ENCODE measurements at regions of chr14 and their contacts with region 1.

Region 1: DNA sequence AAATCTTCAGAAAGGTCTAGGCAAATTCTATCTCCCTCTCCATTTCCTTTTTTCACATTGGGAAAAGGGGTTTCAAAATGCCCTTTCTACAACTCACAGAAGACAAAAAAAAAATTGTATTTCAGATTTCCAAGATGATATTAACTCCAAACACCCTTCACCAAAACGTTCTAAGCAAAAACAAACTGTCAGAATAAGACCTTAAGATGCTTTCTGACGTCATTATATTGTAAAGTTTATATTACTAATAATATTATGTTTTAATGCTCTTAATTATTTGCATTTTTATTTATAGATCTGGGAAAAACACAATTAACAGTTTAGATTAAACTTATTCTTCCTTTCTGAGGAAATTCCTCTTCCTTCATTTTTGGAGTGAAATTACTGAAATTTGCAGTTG is 624.2 kb downstream of the GALC start:
- DNase-seq: no peak
- H3K4me3 Mint-ChIP-seq: no peak overlapping the region
- H3K27ac Mint-ChIP-seq: no peak overlapping the region
- H3K4me1 Mint-ChIP-seq: no peaks in the 10 kb centered on the region
- H3K27me3 Mint-ChIP-seq: no peaks in the 10 kb centered on the region

Region 2: DNA sequence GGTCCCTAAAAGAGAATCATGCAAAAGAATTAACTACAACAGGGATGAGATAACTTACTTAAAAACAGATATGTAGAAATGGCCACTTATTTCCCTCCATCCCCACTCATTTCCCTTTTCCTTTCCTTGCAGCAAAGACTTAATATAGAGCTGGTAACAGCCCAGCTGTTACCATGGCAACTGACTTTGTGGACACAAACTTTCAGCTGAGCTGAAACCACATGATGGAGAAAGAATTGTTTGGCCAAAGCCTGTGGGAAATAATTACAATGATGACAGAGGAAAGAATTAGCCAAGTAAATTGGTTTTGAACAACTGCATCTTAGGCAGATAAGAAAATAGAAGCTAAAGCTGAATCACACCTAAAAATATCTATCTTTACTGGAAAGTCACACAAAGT is 259.4 kb after region 1 on chr14:
- CTCF ChIA-PET with region 1: interaction called, 10 read pairs
- intact Hi-C with region 1: no loop called
- DNase-seq: no peak
- H3K4me3 Mint-ChIP-seq: no peak overlapping the region
- H3K27ac Mint-ChIP-seq: no peak overlapping the region
- H3K4me1 Mint-ChIP-seq: no peaks in the 10 kb centered on the region
- H3K27me3 Mint-ChIP-seq: peaks cover 2% of the 10 kb centered on the region

Measured in activated naive CD4-positive, alpha-beta T cell treated with anti-CD3 and anti-CD28 coated beads for 36 hours (primary cell).